Activated naive CD8-positive, alpha-beta T cell treated with anti-CD3 and anti-CD28 coated beads, Interleukin-2, amount 10 ng/mL, durations not matched to agents 7 days and 5 days (primary cell): ENCODE measurements at regions of chr2 and their contacts with region 1.

Region 1: GRCh38 chr2:172555522-172556283 is at the start of gene PDK1:
- DNase-seq: peak; percentile 97
- ATAC-seq: peak; percentile 93
- H3K4me3 Mint-ChIP-seq: peak within 1 kb of the TSS; percentile 90
- H3K27ac Mint-ChIP-seq: peak within 1 kb of the TSS; percentile 91
- H3K4me1 Mint-ChIP-seq: peaks cover 43% of the 10 kb centered on the region
- H3K27me3 Mint-ChIP-seq: peaks cover 4% of the 10 kb centered on the region
- total RNA-seq, gene PDK1: 42.8 to 44.9 TPM

Region 2: GRCh38 chr2:172496160-172496608 is 59.5 kb before region 1 on chr2:
- POLR2A ChIA-PET with region 1: interaction called, 11 read pairs
- DNase-seq: no peak
- ATAC-seq: peak; percentile 86
- H3K4me3 Mint-ChIP-seq: peak overlapping the region; percentile 70
- H3K27ac Mint-ChIP-seq: peak overlapping the region; percentile 91
- H3K4me1 Mint-ChIP-seq: peaks cover 15% of the 10 kb centered on the region
- H3K27me3 Mint-ChIP-seq: no peaks in the 10 kb centered on the region

Region 3: DNA sequence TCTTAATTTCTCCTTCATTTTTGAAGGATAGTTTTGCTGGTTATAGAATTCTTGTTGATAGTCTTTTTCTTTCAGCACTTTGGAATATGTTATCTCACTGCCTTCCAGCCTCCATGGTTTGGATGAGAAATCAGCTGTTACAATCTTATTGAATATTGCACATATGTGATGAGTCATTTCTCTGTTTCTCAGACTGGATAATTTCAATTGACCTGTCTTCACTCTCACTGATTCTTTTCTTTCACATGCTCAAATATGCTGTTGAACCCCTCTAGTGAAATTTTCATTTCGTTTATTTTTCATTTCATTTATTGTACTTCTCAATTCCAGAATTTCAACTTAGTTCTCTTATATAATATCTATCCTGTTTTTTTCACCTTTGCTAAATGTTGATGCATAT is 22.4 kb after region 1 on chr2:
- POLR2A ChIA-PET with region 1: no interaction called
- DNase-seq: no peak
- ATAC-seq: no peak
- H3K4me3 Mint-ChIP-seq: no peak overlapping the region
- H3K27ac Mint-ChIP-seq: no peak overlapping the region
- H3K4me1 Mint-ChIP-seq: peaks cover 16% of the 10 kb centered on the region
- H3K27me3 Mint-ChIP-seq: no peaks in the 10 kb centered on the region

Region 4: GRCh38 chr2:172726172-172726735 is 170.6 kb after region 1 on chr2:
- POLR2A ChIA-PET with region 1: no interaction called
- DNase-seq: no peak
- ATAC-seq: no peak
- H3K4me3 Mint-ChIP-seq: no peak overlapping the region
- H3K27ac Mint-ChIP-seq: no peak overlapping the region
- H3K4me1 Mint-ChIP-seq: no peaks in the 10 kb centered on the region
- H3K27me3 Mint-ChIP-seq: peaks cover 18% of the 10 kb centered on the region